Spleen (tissue), 13 donors: ENCODE measurements at regions of chr18 and their contacts with region 1.

Region 1: GRCh38 chr18:5294457-5295230 is 882 bp downstream of the ZBTB14 start:
- DNase-seq: peak; percentile 95
- H3K4me3 ChIP-seq: peak overlapping the region; percentile 65 to 91 (median 81)
- H3K27ac ChIP-seq: peak overlapping the region; percentile 91 to 100 (median 99)
- H3K4me1 ChIP-seq: peaks cover 5 to 28% (median 22%) of the 10 kb centered on the region in 6 donors
- H3K27me3 ChIP-seq: no peaks in the 10 kb centered on the region
- CTCF ChIP-seq: no peak
- POLR2A ChIP-seq: peak in 1 of 3 donors; percentile 21

Region 2: GRCh38 chr18:5244941-5245340 is 49.7 kb before region 1 on chr18:
- intact Hi-C with region 1: loop called (anchors 5 kb)
- DNase-seq: no peak
- H3K4me3 ChIP-seq: no peak overlapping the region
- H3K27ac ChIP-seq: no peak overlapping the region
- H3K4me1 ChIP-seq: peaks cover under 1 to 21% (median 11%) of the 10 kb centered on the region in 6 donors
- H3K27me3 ChIP-seq: no peaks in the 10 kb centered on the region
- CTCF ChIP-seq: no peak
- POLR2A ChIP-seq: no peak